ENCODE measurements at regions of chr4 and their contacts with region 1.

Region 1: GRCh38 chr4:41024556-41025491 is 189.5 kb downstream of the APBB2 start:
- DNase-seq: peak; percentile 64
- H3K4me3 ChIP-seq: no peak overlapping the region
- H3K27ac ChIP-seq: no peak overlapping the region
- H3K4me1 ChIP-seq: no peaks in the 10 kb centered on the region
- CTCF ChIP-seq: no peak

Region 2: DNA sequence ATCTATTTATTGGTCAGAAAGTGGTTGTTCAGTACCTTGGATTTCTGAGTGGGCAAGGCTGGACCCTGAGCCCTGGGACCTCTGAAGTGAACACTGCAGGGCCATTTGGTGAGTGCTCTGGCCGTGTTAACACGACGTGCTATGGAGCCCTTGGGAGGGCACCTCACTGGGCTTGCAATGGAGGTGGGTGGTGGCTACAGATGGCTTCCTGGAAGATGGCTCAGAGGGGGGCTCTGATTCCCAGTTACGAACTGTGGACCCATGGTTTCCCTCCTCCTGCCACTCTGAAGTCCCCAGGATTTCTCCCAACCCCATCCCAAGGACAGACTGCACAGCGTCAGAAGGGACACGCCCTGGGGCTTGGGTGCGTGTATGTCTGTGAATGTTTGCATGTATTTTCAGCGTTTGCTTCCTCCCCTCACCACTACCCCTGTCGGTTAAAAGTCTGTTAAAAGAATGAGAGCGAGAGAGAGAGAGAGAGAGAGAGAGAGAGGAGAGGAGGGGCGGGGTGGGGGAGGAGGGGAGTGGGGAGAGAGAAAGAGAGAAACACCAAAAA is 831.7 kb before region 1 on chr4:
- CTCF ChIA-PET with region 1: no interaction called
- POLR2A ChIA-PET with region 1: no interaction called
- intact Hi-C with region 1: no loop called
- DNase-seq: peak; percentile 84
- H3K4me3 ChIP-seq: peak overlapping the region; percentile 79
- H3K27ac ChIP-seq: peak overlapping the region; percentile 93
- H3K4me1 ChIP-seq: peaks cover 76% of the 10 kb centered on the region
- CTCF ChIP-seq: peak; percentile 37; the same call in 1 of the 2 replicates

Region 3: DNA sequence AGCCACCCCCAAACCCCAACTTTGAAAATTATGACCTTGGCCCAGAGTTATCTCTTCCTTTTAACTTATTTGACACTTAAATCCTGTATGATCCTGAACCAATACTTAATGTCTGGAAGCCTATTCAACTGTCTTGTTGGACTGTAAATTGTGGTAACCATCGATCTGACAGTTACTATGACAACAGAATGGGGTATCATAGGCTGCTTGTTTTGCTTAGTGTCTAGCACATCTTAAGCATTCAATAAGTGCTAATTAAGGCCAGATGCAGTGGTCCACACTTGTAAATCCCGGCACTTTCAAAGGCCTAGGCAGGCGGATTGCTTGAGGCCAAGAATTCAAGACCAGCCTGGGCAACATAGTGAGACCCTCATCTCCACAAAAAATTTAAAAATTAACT is 14.5 kb after region 1 on chr4:
- CTCF ChIA-PET with region 1: no interaction called
- POLR2A ChIA-PET with region 1: interaction called, 17 read pairs
- intact Hi-C with region 1: no loop called
- DNase-seq: no peak
- H3K4me3 ChIP-seq: no peak overlapping the region
- H3K27ac ChIP-seq: no peak overlapping the region
- H3K4me1 ChIP-seq: no peaks in the 10 kb centered on the region
- CTCF ChIP-seq: no peak

Region 4: DNA sequence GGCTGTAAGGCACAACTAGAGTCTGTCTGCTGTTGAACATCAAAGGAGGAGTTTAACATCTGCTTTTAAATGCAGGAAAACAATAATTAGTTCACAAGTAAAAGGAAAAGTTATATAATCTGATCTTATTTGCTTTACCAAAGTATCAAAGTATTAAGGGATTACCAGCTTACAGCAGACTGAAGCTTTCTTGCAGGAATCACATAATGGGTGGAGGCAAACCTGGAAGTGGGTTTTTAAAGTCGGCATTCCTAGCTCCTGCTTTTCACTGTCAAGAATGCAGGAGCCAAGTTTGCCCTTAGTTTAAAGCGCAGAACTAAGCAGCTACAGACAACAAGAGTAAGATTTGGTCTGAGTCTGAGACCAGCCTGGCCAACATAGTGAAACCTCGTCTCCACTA is 67.3 kb after region 1 on chr4:
- CTCF ChIA-PET with region 1: no interaction called
- POLR2A ChIA-PET with region 1: no interaction called
- intact Hi-C with region 1: no loop called
- DNase-seq: no peak
- H3K4me3 ChIP-seq: no peak overlapping the region
- H3K27ac ChIP-seq: no peak overlapping the region
- H3K4me1 ChIP-seq: peaks cover 15% of the 10 kb centered on the region
- CTCF ChIP-seq: no peak

Measured in OCI-LY7 (cell line).